ENCODE measurements at regions of chr16 and their contacts with region 1.

Region 1: GRCh38 chr16:11396241-11397048 is 51.2 kb downstream of the RMI2 start:
- DNase-seq: peak; percentile 71 to 83 (median 76)
- ATAC-seq: peak; percentile 63 to 84 (median 84)
- H3K4me3 ChIP-seq: no peak overlapping the region
- H3K27ac ChIP-seq: peak overlapping the region in 3 of 12 donors; percentile 25 to 54 (median 30)
- H3K4me1 ChIP-seq: peaks cover 0 to 7% (median 2%) of the 10 kb centered on the region in 12 donors
- H3K27me3 ChIP-seq: peaks cover 0 to 3% (median 0%) of the 10 kb centered on the region in 9 donors
- CTCF ChIP-seq: peak; percentile 96 to 100 (median 98)
- POLR2A ChIP-seq: no peak

Region 2: GRCh38 chr16:11819798-11820197 is 423.4 kb after region 1 on chr16:
- intact Hi-C with region 1: loop called in 7 of 10 experiments (anchors 10 kb)
- DNase-seq: no peak
- ATAC-seq: no peak
- H3K4me3 ChIP-seq: no peak overlapping the region
- H3K27ac ChIP-seq: no peak overlapping the region
- H3K4me1 ChIP-seq: peaks cover 0 to 19% (median 5%) of the 10 kb centered on the region in 12 donors
- H3K27me3 ChIP-seq: no peaks in the 10 kb centered on the region
- CTCF ChIP-seq: no peak
- POLR2A ChIP-seq: no peak

Region 3: DNA sequence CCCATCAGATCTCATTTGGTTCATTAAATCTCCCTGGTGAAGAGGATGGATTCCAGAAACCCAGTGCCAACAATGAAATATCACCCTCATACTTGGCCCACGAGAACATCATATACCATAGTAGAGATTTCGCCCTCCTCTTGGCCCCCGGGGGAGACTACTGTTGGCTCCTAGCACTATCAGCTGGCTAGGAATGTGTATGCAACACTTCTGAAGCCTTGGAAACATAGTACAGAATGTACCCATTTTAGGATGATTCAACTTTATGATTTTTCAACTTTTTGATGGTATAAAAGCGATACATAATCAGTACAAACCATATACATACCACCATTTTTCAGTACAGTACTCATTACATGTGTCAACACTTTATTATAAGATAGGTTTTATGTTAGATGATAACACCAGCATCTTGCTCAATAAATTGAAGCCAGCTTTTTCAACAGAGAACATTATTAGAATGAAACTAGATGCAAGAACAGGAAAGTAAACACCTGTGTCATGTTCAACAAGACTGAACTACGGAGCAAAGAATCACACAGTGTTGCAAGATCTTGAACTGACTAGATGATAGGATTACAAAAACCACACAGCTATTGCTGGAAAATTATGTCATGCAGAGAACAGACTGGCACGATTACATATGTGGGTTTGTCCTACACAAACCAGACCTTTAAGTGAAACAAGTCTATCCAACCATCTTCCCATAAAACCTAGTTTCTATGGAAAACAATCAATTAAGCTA is 437.7 kb after region 1 on chr16:
- intact Hi-C with region 1: no loop called
- DNase-seq: no peak
- ATAC-seq: no peak
- H3K4me3 ChIP-seq: no peak overlapping the region
- H3K27ac ChIP-seq: no peak overlapping the region
- H3K4me1 ChIP-seq: peaks cover 0 to 13% (median 0%) of the 10 kb centered on the region in 12 donors
- H3K27me3 ChIP-seq: no peaks in the 10 kb centered on the region
- CTCF ChIP-seq: no peak
- POLR2A ChIP-seq: no peak